Kidney (tissue), 22 donors: ENCODE measurements at regions of chr11 and their contacts with region 1.

Region 1: GRCh38 chr11:19553683-19554333 is 158.8 kb upstream of the NAV2 start:
- DNase-seq: peak; percentile 79 to 88 (median 82)
- H3K4me3 ChIP-seq: no peak overlapping the region
- H3K27ac ChIP-seq: no peak overlapping the region
- H3K4me1 ChIP-seq: no peaks in the 10 kb centered on the region
- H3K27me3 ChIP-seq: no peaks in the 10 kb centered on the region
- CTCF ChIP-seq: peak; percentile 85

Region 2: DNA sequence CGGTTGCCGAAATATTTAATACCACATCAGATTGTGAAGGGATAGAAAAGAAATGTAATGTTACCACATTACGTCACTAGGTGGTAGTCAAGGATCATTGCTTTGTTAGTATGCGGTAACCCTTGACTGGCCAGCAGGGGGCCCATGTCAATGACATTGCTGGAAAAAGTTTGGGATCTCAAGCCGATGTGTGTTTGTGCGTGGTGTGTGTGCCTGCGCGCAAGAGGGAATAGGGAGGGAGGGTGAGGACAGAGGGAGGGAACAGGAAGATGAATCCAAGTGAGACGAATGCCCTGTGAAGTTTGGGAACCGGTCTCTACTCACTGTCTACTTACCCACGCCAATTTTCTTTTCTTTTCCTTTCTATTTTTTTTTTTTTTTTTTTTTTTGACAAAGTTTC is 482.6 kb before region 1 on chr11:
- intact Hi-C with region 1: loop called (anchors 10 kb)
- DNase-seq: peak; percentile 80 to 93 (median 87)
- H3K4me3 ChIP-seq: peak overlapping the region in 2 of 3 donors; percentile 28 to 36
- H3K27ac ChIP-seq: no peak overlapping the region
- H3K4me1 ChIP-seq: peaks cover 0 to 3% (median 0%) of the 10 kb centered on the region in 3 donors
- H3K27me3 ChIP-seq: no peaks in the 10 kb centered on the region
- CTCF ChIP-seq: peak; percentile 91

Region 3: GRCh38 chr11:19316434-19316833 is 237.4 kb before region 1 on chr11:
- intact Hi-C with region 1: loop called (anchors 5 kb)
- DNase-seq: peak in 2 of 5 donors; percentile 29 to 71
- H3K4me3 ChIP-seq: no peak overlapping the region
- H3K27ac ChIP-seq: no peak overlapping the region
- H3K4me1 ChIP-seq: no peaks in the 10 kb centered on the region
- H3K27me3 ChIP-seq: no peaks in the 10 kb centered on the region
- CTCF ChIP-seq: no peak

Region 4: GRCh38 chr11:19723572-19724342 is 169.9 kb after region 1 on chr11:
- intact Hi-C with region 1: no loop called
- DNase-seq: peak in 2 of 5 donors; percentile 9 to 72
- H3K4me3 ChIP-seq: no peak overlapping the region
- H3K27ac ChIP-seq: no peak overlapping the region
- H3K4me1 ChIP-seq: peaks cover 0 to 5% (median 0%) of the 10 kb centered on the region in 3 donors
- H3K27me3 ChIP-seq: no peaks in the 10 kb centered on the region
- CTCF ChIP-seq: no peak

Region 5: DNA sequence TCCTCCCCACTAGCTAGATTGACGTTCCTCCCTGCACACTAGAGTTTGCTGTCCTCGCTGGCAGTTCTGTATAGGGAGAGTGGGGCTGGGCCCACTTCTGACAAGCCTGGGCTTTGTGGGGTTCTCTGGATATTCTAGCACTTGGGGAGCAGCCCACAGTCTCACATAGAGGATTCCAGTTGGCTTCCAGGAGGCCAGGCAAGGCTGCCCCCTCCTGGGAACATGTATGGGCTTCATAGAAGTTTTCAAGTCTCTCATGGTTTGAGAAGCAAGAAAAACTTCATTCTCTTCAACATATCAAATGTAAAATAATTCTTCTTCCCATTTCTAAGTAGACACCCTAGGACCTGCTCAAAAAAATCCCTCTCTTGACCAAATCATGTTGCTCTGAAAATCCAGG is 246.4 kb after region 1 on chr11:
- intact Hi-C with region 1: no loop called
- DNase-seq: no peak
- H3K4me3 ChIP-seq: no peak overlapping the region
- H3K27ac ChIP-seq: no peak overlapping the region
- H3K4me1 ChIP-seq: no peaks in the 10 kb centered on the region
- H3K27me3 ChIP-seq: no peaks in the 10 kb centered on the region
- CTCF ChIP-seq: no peak